ENCODE measurements at regions of chr2 and their contacts with region 1.

Region 1: GRCh38 chr2:200864176-200864976 is at the start of gene CLK1:
- DNase-seq: peak; percentile 99
- total RNA-seq, gene CLK1: 58.3 TPM

Region 2: GRCh38 chr2:200713003-200713703 is 151.2 kb before region 1 on chr2:
- intact Hi-C with region 1: loop called (anchors 5 kb)
- DNase-seq: peak; percentile 93

Region 3: DNA sequence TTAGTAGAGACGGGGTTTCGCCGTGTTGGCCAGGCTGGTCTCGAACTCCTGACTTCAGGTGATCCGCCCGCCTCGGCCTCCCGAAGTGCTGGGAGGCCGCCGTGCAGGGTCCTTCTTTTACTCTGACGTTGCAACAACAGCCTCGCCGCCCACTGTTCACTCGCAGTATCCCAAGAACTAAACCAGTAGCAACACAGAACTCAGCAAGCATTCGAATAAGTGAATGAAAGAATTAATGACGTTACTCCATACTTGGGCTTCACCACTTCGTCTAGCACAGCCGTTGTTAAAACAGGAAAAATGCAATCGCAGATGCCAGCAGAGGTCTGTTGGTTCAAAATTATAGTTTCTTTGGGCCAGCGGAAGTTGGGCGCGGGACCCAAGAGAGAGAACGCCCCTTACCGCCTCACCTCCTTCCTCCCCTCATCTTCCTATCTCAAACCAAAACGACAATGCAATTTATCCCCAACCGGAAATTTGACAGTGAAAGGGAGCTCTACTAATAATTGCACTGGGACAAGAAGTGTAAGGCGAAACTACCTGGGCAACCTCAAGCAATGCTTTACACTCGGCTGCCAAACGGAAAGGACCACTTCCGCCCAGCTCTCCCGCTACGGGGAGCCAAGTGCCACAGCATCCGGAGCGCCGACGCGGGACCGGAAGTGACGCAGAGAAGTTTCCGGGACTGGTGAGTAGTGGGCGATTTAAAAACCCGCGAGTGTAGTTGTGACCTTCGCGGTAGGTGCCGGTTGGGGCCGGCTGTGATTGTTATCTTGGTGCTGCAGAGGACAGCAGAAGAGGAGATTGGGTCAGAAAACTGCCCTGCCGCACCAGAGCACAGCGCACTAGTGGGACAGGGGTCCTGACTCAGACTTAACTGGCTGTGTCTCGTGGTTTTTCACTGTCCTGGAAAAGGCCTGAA is 24.6 kb after region 1 on chr2 and contains the starts of genes NIF3L1 and PPIL3:
- intact Hi-C with region 1: loop called (anchors 2 kb)
- DNase-seq: peak; percentile 97
- total RNA-seq, gene NIF3L1: 19.1 TPM
- total RNA-seq, gene PPIL3: 19.4 TPM

Region 4: GRCh38 chr2:201118121-201118960 is 254.0 kb after region 1 on chr2:
- intact Hi-C with region 1: loop called (anchors 2 kb)
- DNase-seq: peak; percentile 95